ENCODE measurements at regions of chr17 and their contacts with region 1.

Region 1: DNA sequence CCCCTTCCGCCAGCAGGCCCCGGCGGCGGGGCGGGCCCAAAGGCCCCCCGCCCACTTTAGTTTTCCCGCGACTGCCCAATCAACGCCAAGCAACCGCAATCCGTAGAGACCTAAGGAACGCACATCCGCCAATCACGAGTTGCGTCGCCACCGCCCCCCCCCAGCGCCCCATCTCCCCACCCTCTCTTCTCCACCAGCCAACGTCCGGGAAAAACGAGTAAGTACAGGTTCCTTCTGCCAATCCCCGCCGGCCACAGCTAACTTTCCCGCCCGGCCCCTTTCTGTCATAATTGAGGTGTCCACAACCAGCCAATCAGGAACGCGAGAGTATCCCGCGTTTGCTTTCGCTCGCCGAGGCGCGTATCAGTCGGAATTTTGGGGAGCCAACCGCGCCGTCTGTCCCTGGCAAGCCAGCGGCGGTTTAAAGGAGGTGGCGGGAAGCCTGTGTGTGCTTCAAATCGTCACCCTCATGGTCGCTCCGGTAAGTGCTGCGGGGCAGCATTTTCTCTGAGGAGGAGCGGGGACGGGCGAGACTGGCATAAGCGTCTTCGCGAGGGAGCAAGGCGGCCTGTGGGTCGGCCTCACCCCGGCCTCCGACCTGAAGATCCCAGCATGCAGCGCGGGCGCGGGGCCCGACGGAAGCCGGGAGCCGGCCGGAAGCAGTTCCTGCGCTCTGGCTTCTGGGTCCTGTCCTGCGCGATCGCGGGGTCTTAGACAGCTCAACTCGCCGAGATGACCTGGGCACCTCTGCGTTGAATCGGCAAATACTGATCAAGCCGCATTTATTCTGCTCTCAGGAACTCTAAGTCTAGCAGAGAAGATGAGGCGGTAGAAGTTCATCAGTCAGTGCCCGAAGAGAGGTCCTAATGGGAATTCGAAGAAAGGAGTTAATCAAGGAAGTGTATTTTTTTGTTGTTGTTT is at the start of gene MIS12:
- DNase-seq: peak; percentile 97 to 99 (median 98)
- H3K4me3 ChIP-seq: peak within 1 kb of the TSS; percentile 92
- H3K4me3 Mint-ChIP-seq: peak within 1 kb of the TSS; percentile 89 to 98 (median 96)
- H3K27ac ChIP-seq: peak within 1 kb of the TSS; percentile 97
- H3K27ac Mint-ChIP-seq: peak within 1 kb of the TSS; percentile 95 to 99 (median 98)
- H3K4me1 ChIP-seq: peaks cover 31% of the 10 kb centered on the region
- H3K4me1 Mint-ChIP-seq: peaks cover 41 to 68% (median 66%) of the 10 kb centered on the region in 3 donors
- H3K27me3 ChIP-seq: no peaks in the 10 kb centered on the region
- H3K27me3 Mint-ChIP-seq: peaks cover 0 to 3% of the 10 kb centered on the region in 2 donors
- total RNA-seq, gene MIS12: 47.3 to 48.1 TPM

Region 2: GRCh38 chr17:5468075-5468473 is 18.4 kb before region 1 on chr17:
- CTCF ChIA-PET with region 1: interaction called, 4 read pairs
- POLR2A ChIA-PET with region 1: interaction called, 14 read pairs
- DNase-seq: peak in 2 of 5 donors; percentile 1 to 21
- H3K4me3 ChIP-seq: peak overlapping the region; percentile 69
- H3K4me3 Mint-ChIP-seq: peak overlapping the region; percentile 83 to 95 (median 87)
- H3K27ac ChIP-seq: peak overlapping the region; percentile 62
- H3K27ac Mint-ChIP-seq: peak overlapping the region; percentile 3 to 91 (median 66)
- H3K4me1 ChIP-seq: peaks cover 13% of the 10 kb centered on the region
- H3K4me1 Mint-ChIP-seq: peaks cover 35 to 46% (median 44%) of the 10 kb centered on the region in 3 donors
- H3K27me3 ChIP-seq: no peaks in the 10 kb centered on the region
- H3K27me3 Mint-ChIP-seq: no peaks in the 10 kb centered on the region

Region 3: GRCh38 chr17:5500589-5501391 is 14.3 kb after region 1 on chr17:
- CTCF ChIA-PET with region 1: interaction called, 10 read pairs
- POLR2A ChIA-PET with region 1: interaction called, 21 read pairs
- DNase-seq: peak; percentile 67 to 93 (median 82)
- H3K4me3 ChIP-seq: peak overlapping the region; percentile 47
- H3K4me3 Mint-ChIP-seq: peak overlapping the region; percentile 82 to 96 (median 95)
- H3K27ac ChIP-seq: peak overlapping the region; percentile 38
- H3K27ac Mint-ChIP-seq: peak overlapping the region; percentile 62 to 97 (median 94)
- H3K4me1 ChIP-seq: peaks cover 10% of the 10 kb centered on the region
- H3K4me1 Mint-ChIP-seq: peaks cover 21 to 27% (median 22%) of the 10 kb centered on the region in 3 donors
- H3K27me3 ChIP-seq: no peaks in the 10 kb centered on the region
- H3K27me3 Mint-ChIP-seq: peaks cover 0 to 1% of the 10 kb centered on the region in 2 donors

Region 4: DNA sequence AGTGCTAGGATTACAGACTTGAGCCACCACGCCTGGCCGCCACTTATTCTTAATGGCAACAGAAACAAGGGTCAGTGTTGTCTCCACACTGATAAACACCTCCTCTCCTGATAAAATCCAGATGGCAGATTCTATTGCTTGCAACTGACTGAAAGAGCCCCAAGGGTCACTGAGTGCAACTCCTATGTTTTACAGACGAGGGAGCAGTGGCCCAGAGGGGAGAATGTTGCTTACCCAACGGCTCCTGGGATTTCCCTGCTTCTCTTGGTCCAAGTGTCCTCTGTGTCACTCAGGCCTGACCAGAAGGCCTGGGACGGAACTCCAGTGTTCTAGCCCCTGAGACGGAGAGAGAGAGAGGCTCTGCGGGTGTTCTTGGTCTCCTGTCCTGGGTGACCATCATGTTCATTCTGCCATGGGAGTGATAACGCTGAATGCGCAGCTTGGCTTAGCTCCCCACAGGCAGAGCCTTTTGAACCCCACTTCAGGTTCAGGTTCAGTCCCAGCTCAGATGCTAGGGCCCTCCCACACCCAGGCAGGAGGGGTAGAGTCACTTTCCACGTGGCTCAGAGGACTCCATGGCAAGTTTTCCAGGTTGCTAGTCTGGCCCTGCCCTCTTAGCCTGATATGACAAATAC is 175.1 kb after region 1 on chr17:
- CTCF ChIA-PET with region 1: no interaction called
- POLR2A ChIA-PET with region 1: no interaction called
- DNase-seq: no peak
- H3K4me3 ChIP-seq: no peak overlapping the region
- H3K4me3 Mint-ChIP-seq: no peak overlapping the region
- H3K27ac ChIP-seq: no peak overlapping the region
- H3K27ac Mint-ChIP-seq: no peak overlapping the region
- H3K4me1 ChIP-seq: no peaks in the 10 kb centered on the region
- H3K4me1 Mint-ChIP-seq: no peaks in the 10 kb centered on the region
- H3K27me3 ChIP-seq: no peaks in the 10 kb centered on the region
- H3K27me3 Mint-ChIP-seq: peaks cover 14 to 34% of the 10 kb centered on the region in 2 donors